Mammary epithelial cell (primary cell): ENCODE measurements at regions of chrX and their contacts with region 1.

Region 1: GRCh38 chrX:16826207-16826606 is 39.9 kb downstream of the TXLNG start:
- DNase-seq: peak; percentile 50
- H3K4me3 ChIP-seq: no peak overlapping the region
- H3K27ac ChIP-seq: peak overlapping the region; percentile 93
- H3K4me1 ChIP-seq: peaks cover 44% of the 10 kb centered on the region
- H3K27me3 ChIP-seq: no peaks in the 10 kb centered on the region
- CTCF ChIP-seq: peak; percentile 34 to 58

Region 2: GRCh38 chrX:16771483-16772398 is 54.5 kb before region 1 on chrX:
- CTCF ChIA-PET with region 1: no interaction called
- dilution Hi-C with region 1: loop called (anchors 5 kb)
- in situ Hi-C with region 1: no loop called
- intact Hi-C with region 1: no loop called
- DNase-seq: peak; percentile 87
- H3K4me3 ChIP-seq: no peak overlapping the region
- H3K27ac ChIP-seq: peak overlapping the region; percentile 98
- H3K4me1 ChIP-seq: peaks cover 11% of the 10 kb centered on the region
- H3K27me3 ChIP-seq: no peaks in the 10 kb centered on the region
- CTCF ChIP-seq: no peak

Region 3: GRCh38 chrX:16870095-16870860 is 44.1 kb after region 1 on chrX and contains the start of gene RBBP7:
- CTCF ChIA-PET with region 1: no interaction called
- dilution Hi-C with region 1: no loop called
- in situ Hi-C with region 1: no loop called
- intact Hi-C with region 1: loop called (anchors 2 kb)
- DNase-seq: peak; percentile 94
- H3K4me3 ChIP-seq: peak within 1 kb of the TSS; percentile 65 to 89 (median 76)
- H3K27ac ChIP-seq: peak within 1 kb of the TSS; percentile 75
- H3K4me1 ChIP-seq: peaks cover 22% of the 10 kb centered on the region
- H3K27me3 ChIP-seq: no peaks in the 10 kb centered on the region
- CTCF ChIP-seq: no peak
- total RNA-seq, gene RBBP7: 95.9 to 170 TPM

Region 4: DNA sequence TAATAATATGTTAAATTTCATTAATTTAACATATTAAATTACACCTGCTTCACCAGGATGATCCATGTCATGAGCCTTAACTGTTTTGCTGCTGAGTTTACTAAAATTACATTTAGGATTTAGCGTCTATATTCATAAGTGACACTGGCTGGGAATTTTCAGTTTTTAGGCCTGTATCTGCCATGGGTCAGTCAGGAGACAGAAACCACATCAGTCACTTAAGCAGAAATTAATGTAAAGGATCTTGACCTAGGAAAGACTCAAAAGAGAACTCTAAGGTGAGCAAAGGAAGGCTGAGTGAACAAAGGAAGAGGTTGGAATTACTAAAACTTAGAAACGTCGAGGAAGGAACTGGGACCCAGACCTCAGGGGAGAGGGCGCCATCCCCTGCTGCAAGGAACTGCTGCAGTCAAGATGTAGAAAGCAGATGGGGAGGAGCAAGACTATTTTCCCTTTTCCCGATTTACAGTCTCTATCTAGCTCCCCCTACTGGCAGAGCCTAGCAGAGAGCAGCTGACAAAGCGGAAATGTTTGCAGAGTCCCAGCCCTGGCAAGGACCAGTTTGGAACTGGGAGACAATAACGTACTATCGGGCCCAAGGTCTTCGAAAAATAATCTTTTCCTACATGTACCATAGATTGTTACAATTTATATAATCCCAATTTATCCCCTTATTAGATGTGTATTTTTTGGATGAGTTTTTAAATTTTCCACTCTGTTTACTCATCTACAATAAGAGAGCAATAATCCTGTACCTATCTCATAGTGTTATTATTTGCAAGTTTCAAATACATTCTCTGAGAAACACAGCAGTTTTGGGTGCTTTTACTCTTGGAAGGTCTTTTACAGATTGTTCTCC is 66.5 kb after region 1 on chrX:
- CTCF ChIA-PET with region 1: no interaction called
- dilution Hi-C with region 1: loop called (anchors 5 kb)
- in situ Hi-C with region 1: no loop called
- intact Hi-C with region 1: loop called (anchors 2 kb)
- DNase-seq: peak; percentile 72
- H3K4me3 ChIP-seq: no peak overlapping the region
- H3K27ac ChIP-seq: no peak overlapping the region
- H3K4me1 ChIP-seq: no peaks in the 10 kb centered on the region
- H3K27me3 ChIP-seq: peaks cover 3% of the 10 kb centered on the region
- CTCF ChIP-seq: peak; percentile 94 to 99

Region 5: GRCh38 chrX:17082831-17083230 is 256.6 kb after region 1 on chrX:
- CTCF ChIA-PET with region 1: interaction called, 5 read pairs
- dilution Hi-C with region 1: no loop called
- in situ Hi-C with region 1: no loop called
- intact Hi-C with region 1: loop called (anchors 1 kb)
- DNase-seq: peak; percentile 34
- H3K4me3 ChIP-seq: no peak overlapping the region
- H3K27ac ChIP-seq: no peak overlapping the region
- H3K4me1 ChIP-seq: peaks cover 10% of the 10 kb centered on the region
- H3K27me3 ChIP-seq: no peaks in the 10 kb centered on the region
- CTCF ChIP-seq: peak; percentile 26 to 44